Activated T-helper 1 cell treated with anti-CD3 and anti-CD28 coated beads, Interleukin-12 subunit alpha, Interleukin-12 subunit beta, Interleukin-2, Interleukin-4 antibody, amounts not matched to agents 30 ng/mL and 10 ng/mL and 1 ng/mL, durations not matched to agents 14 hours and 24 hours and 36 hours (primary cell): ENCODE measurements at regions of chr1 and their contacts with region 1.

Region 1: GRCh38 chr1:24955161-24955560 is 25.1 kb upstream of the RUNX3 start:
- DNase-seq: peak; percentile 77
- H3K4me3 Mint-ChIP-seq: peak overlapping the region; percentile 76
- H3K27ac Mint-ChIP-seq: peak overlapping the region; percentile 93
- H3K4me1 Mint-ChIP-seq: peaks cover 93% of the 10 kb centered on the region
- H3K27me3 Mint-ChIP-seq: no peaks in the 10 kb centered on the region

Region 2: DNA sequence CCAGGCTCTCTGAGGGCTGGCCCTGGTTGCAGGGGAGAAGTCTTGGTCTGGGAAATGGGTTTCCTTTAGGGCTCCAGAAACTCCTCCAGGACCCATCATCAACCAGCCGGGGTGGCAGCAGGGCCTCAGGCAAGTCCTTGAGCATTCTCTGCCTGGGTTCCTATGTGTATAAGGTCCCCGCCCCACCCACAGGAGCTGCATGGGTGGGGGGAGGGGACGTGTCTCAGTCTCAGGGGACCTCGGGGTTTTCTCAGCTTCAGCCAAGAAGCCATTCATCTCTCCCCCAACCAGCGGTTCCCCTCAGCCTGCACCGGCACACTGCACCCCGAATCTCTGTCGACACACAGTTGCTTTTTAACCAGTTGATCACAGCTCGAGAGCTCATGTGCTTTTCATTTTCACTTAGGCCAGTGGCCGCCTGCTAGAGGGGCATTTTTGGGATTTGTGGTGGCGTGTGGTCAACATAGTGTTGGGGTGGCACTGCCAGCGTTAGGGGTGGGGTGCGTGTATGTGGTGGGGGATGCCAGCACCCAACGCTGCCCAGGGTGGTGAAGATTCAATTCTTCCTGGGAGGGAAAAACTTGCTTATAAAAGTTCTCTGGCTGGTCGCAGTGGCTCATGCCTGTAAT is 31.6 kb before region 1 on chr1:
- intact Hi-C with region 1: loop called (anchors 1 kb)
- DNase-seq: no peak
- H3K4me3 Mint-ChIP-seq: peak overlapping the region; percentile 45
- H3K27ac Mint-ChIP-seq: peak overlapping the region; percentile 71
- H3K4me1 Mint-ChIP-seq: peaks cover 78% of the 10 kb centered on the region
- H3K27me3 Mint-ChIP-seq: peaks cover 2% of the 10 kb centered on the region

Region 3: GRCh38 chr1:24987875-24988557 is 32.9 kb after region 1 on chr1:
- intact Hi-C with region 1: loop called (anchors 1 kb)
- DNase-seq: no peak
- H3K4me3 Mint-ChIP-seq: no peak overlapping the region
- H3K27ac Mint-ChIP-seq: no peak overlapping the region
- H3K4me1 Mint-ChIP-seq: peaks cover 97% of the 10 kb centered on the region
- H3K27me3 Mint-ChIP-seq: no peaks in the 10 kb centered on the region

Region 4: GRCh38 chr1:25031966-25032667 is 77.0 kb after region 1 on chr1:
- intact Hi-C with region 1: loop called (anchors 1 kb)
- DNase-seq: no peak
- H3K4me3 Mint-ChIP-seq: peak overlapping the region; percentile 88
- H3K27ac Mint-ChIP-seq: peak overlapping the region; percentile 99
- H3K4me1 Mint-ChIP-seq: peaks cover 68% of the 10 kb centered on the region
- H3K27me3 Mint-ChIP-seq: peaks cover 2% of the 10 kb centered on the region

Region 5: DNA sequence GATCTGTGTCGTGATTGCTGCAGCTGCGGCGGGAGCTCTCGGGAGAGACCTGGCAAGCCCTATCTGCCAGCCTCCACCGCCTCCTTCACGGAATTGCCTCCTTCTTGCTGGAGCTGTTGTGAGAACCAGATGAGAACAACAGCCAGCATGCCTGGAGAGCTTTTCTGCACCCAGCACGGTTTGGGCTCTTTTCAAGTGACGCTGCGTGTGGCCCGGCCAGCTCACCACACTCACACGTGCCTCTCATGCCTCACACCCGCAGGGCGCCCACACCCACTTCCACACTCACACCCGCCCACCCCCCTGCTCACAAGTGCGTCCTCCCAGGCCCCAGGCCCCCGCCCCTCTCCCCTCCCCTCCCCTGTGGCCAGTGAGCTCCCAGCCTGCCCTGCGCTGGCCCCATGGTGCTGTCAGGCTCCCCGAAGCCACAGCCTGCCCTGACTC is 110.7 kb after region 1 on chr1:
- intact Hi-C with region 1: loop called (anchors 1 kb)
- DNase-seq: no peak
- H3K4me3 Mint-ChIP-seq: no peak overlapping the region
- H3K27ac Mint-ChIP-seq: no peak overlapping the region
- H3K4me1 Mint-ChIP-seq: peaks cover 25% of the 10 kb centered on the region
- H3K27me3 Mint-ChIP-seq: peaks cover 23% of the 10 kb centered on the region

Region 6: GRCh38 chr1:25099343-25099951 is 144.3 kb after region 1 on chr1:
- intact Hi-C with region 1: loop called (anchors 2 kb)
- DNase-seq: peak; percentile 37
- H3K4me3 Mint-ChIP-seq: peak overlapping the region; percentile 68
- H3K27ac Mint-ChIP-seq: peak overlapping the region; percentile 88
- H3K4me1 Mint-ChIP-seq: peaks cover 84% of the 10 kb centered on the region
- H3K27me3 Mint-ChIP-seq: peaks cover 2% of the 10 kb centered on the region

Region 7: GRCh38 chr1:25239681-25240541 is 284.8 kb after region 1 on chr1:
- intact Hi-C with region 1: loop called (anchors 10 kb)
- DNase-seq: peak; percentile 88
- H3K4me3 Mint-ChIP-seq: peak overlapping the region; percentile 83
- H3K27ac Mint-ChIP-seq: peak overlapping the region; percentile 91
- H3K4me1 Mint-ChIP-seq: peaks cover 63% of the 10 kb centered on the region
- H3K27me3 Mint-ChIP-seq: no peaks in the 10 kb centered on the region